ENCODE measurements at regions of chr1 and their contacts with region 1.

Region 1: DNA sequence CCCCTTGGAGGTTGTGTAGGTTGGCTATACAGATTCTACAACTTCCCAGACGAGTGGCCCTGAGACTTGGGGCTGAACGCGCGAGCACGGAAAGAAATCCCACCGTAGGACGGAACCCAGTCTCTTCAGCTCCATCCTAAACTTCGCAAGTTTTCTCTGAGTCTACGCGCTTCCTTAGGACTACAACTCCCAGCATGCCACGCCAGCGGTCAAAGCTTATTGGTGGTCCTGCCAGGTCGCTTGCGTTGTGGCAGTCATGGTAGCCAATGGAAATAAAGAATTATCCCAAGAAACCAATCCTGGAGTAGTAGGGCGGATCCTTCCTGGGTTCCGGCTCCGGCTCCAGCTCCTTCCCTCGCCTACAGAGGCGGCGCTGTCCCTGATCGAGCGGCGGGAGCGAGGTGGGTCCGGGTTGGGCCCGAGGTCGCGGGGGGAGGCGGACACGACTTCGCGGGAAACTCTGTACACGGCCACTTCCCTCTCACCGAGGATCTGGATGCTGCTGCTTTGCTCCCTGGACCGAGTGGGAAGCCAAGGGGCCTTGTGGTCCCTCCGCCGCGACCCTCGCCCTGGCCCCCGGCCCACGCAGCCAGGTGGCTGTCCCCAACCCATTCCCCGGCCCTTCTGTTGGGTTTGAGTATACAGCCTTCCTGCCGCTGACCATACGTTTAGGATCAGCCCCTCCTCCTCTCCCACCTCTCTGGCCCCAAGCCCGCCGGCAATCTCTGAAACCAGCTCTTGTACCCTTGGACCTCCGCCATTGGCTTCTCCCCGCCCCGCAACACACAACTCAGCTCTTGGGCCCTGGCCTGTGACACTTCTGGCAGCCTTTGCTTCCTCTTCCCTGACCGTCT is at the start of gene ZNF691:
- DNase-seq: peak; percentile 90
- ATAC-seq: peak; percentile 100
- H3K4me3 ChIP-seq: peak within 1 kb of the TSS; percentile 57 to 76
- H3K27ac ChIP-seq: peak within 1 kb of the TSS; percentile 68
- H3K4me1 ChIP-seq: peaks cover 5% of the 10 kb centered on the region
- H3K27me3 ChIP-seq: no peaks in the 10 kb centered on the region
- CTCF ChIP-seq: peak; percentile 62
- total RNA-seq, gene ZNF691: 9.9 TPM

Region 2: DNA sequence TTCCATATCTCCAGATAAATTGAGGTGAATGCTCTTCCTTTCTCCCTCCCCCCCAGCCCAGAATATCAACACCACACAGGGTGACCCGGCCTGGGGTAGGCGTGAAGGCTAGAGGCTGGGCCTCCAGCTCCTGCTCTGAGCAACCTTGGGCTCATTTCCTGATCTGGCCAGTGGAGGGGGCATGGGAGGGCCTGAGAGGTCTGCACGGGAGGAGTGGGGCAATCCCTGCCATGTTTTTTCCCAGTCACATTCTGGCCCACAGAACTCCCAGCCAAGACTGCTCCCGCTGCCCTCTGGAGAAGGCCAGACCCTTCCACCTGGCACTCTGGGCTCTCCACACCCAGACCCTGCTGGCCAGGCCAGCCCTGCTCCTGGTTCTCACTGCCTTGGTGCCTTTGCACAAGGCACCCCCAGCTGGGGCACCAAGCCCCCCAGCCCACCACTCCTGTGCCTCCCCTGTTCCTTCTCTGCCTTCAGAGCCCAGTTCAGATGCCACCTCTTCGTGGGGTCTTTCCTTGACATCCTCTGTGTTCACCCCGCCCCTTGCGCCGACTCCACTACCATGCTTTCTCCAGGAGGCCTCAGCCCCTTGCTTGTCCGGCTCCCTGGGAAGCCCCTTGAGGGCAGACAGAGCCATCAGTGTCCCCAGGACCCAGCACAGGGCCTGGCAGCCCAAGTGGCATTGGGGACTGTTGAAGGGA is 110.2 kb before region 1 on chr1:
- CTCF ChIA-PET with region 1: no interaction called
- POLR2A ChIA-PET with region 1: no interaction called
- in situ Hi-C with region 1: no loop called
- intact Hi-C with region 1: no loop called
- DNase-seq: no peak
- ATAC-seq: peak; percentile 75
- H3K4me3 ChIP-seq: no peak overlapping the region
- H3K27ac ChIP-seq: no peak overlapping the region
- H3K4me1 ChIP-seq: no peaks in the 10 kb centered on the region
- H3K27me3 ChIP-seq: no peaks in the 10 kb centered on the region
- CTCF ChIP-seq: no peak

Region 3: DNA sequence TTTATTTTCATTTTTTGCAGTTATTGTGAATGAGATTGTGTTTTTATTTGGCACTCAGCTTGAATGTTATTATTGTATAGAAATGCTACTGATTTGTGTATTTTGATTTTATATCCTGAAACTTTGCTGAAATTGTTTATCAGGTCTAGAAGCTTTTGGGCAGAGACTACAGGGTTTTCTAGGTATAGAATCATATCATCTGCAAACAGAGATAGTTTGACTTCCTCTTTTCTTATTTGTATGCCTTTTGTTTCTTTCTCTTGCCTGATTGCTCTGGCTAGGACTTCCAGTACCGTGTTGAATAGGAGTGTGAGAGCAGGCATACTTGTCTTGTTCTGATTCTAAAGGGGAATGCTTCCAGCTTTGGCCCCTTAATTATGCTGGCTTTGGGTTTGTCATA is 27.2 kb after region 1 on chr1:
- CTCF ChIA-PET with region 1: no interaction called
- POLR2A ChIA-PET with region 1: interaction called, 13 read pairs
- in situ Hi-C with region 1: no loop called
- intact Hi-C with region 1: no loop called
- DNase-seq: no peak
- ATAC-seq: no peak
- H3K4me3 ChIP-seq: no peak overlapping the region
- H3K27ac ChIP-seq: no peak overlapping the region
- H3K4me1 ChIP-seq: no peaks in the 10 kb centered on the region
- H3K27me3 ChIP-seq: peaks cover 7% of the 10 kb centered on the region
- CTCF ChIP-seq: no peak